Heart left ventricle (tissue), 16 donors: ENCODE measurements at regions of chr7 and their contacts with region 1.

Region 1: GRCh38 chr7:53602817-53603418 is 567.5 kb downstream of the POM121L12 start:
- DNase-seq: no peak
- ATAC-seq: peak in 1 of 4 donors; percentile 13
- H3K4me3 ChIP-seq: no peak overlapping the region
- H3K27ac ChIP-seq: no peak overlapping the region
- H3K4me1 ChIP-seq: no peaks in the 10 kb centered on the region
- H3K27me3 ChIP-seq: no peaks in the 10 kb centered on the region
- CTCF ChIP-seq: no peak
- POLR2A ChIP-seq: no peak

Region 2: GRCh38 chr7:53661645-53662217 is 58.8 kb after region 1 on chr7:
- intact Hi-C with region 1: loop called in 1 of 10 experiments (anchors 10 kb)
- DNase-seq: no peak
- ATAC-seq: no peak
- H3K4me3 ChIP-seq: no peak overlapping the region
- H3K27ac ChIP-seq: no peak overlapping the region
- H3K4me1 ChIP-seq: no peaks in the 10 kb centered on the region
- H3K27me3 ChIP-seq: no peaks in the 10 kb centered on the region
- CTCF ChIP-seq: no peak
- POLR2A ChIP-seq: no peak